Heart right ventricle (tissue), 16 donors: ENCODE measurements at regions of chr18 and their contacts with region 1.

Region 1: DNA sequence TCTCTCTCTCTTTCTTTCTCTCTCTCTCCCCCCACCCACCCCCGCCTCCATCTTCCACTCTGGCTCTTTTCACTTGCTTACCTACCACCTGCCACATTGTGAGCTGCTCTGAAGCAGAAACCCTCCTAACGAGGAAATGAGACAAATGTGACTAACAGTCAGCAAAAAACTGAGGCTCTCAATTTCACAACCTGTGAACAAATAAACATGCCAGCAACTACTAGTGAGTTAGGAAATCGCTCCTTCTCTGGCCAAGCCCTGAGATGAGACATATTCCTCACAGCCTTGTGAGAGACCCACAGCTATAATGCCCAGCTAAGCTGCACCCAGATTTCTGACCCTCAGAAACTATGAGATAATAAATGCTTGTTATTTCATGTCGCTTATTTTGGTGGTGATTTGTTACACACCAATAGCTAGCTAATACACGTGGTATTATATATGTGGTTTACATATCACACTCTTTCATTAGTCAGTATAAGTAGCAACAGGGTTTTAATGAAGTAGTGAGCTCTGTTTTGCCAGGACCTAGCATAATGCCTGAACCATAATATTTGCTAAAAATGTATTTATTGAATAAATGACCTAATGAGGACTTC is 8.4 kb upstream of the ZNF521 start:
- DNase-seq: no peak
- ATAC-seq: no peak
- H3K4me3 ChIP-seq: no peak overlapping the region
- H3K27ac ChIP-seq: no peak overlapping the region
- H3K4me1 ChIP-seq: no peaks in the 10 kb centered on the region
- H3K27me3 ChIP-seq: peaks cover 0 to 11% (median 0%) of the 10 kb centered on the region in 7 donors
- CTCF ChIP-seq: no peak

Region 2: GRCh38 chr18:25279133-25279532 is 81.3 kb before region 1 on chr18:
- intact Hi-C with region 1: no loop called
- DNase-seq: no peak
- ATAC-seq: no peak
- H3K4me3 ChIP-seq: no peak overlapping the region
- H3K27ac ChIP-seq: no peak overlapping the region
- H3K4me1 ChIP-seq: peaks cover 8 to 68% (median 40%) of the 10 kb centered on the region in 9 donors
- H3K27me3 ChIP-seq: no peaks in the 10 kb centered on the region
- CTCF ChIP-seq: no peak

Region 3: GRCh38 chr18:25420077-25420825 is 59.9 kb after region 1 on chr18:
- intact Hi-C with region 1: loop called in 1 of 10 experiments (anchors 10 kb)
- DNase-seq: no peak
- ATAC-seq: no peak
- H3K4me3 ChIP-seq: no peak overlapping the region
- H3K27ac ChIP-seq: no peak overlapping the region
- H3K4me1 ChIP-seq: peaks cover 0 to 9% (median 0%) of the 10 kb centered on the region in 9 donors
- H3K27me3 ChIP-seq: peaks cover 0 to 19% (median 0%) of the 10 kb centered on the region in 7 donors
- CTCF ChIP-seq: no peak